ENCODE measurements at regions of chr14 and their contacts with region 1.

Region 1: GRCh38 chr14:73173092-73173735 is 36.9 kb downstream of the PSEN1 start:
- DNase-seq: no peak
- ATAC-seq: no peak

Region 2: DNA sequence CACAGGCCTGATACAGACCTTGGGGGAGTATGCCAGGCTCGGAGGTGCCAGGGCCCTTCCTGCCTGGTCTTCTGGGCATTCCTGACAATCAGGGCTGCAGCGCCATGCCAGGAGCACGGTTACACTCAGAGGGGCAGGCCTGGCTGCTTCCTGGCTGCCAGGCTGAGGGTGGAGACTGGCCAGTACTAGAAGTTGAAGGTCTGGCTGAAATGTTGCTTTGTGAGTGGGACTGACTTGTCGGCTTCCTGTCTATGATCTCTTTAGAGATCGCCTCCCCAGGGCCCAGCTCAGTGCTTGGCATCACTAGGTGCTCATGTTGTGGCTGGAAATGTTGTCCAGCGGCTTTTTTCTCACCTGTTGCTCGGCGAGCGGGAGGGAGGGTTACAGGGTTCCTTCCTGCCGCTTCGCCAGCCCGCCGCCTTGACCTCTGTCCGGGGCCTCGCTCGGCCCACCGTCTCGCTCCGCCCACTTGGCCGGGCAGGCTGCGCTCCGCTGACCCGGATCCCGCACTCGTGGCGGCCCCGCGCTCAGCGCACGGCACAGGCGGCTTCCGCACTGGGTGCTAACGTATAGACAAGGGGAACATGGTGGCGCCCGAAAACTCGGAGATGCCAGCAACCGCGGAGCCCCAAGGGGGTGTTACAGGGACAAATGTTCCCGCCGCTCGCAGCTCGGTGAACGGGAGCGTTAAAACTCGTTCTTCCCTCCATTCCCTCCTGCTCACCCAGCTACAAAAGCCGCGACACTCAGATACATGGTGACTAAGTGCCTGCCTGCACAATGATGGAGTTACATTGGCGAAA is 96.7 kb after region 1 on chr14:
- intact Hi-C with region 1: loop called in 1 of 2 experiments (anchors 10 kb)
- DNase-seq: peak; percentile 64
- ATAC-seq: peak; percentile 82 to 84

Region 3: DNA sequence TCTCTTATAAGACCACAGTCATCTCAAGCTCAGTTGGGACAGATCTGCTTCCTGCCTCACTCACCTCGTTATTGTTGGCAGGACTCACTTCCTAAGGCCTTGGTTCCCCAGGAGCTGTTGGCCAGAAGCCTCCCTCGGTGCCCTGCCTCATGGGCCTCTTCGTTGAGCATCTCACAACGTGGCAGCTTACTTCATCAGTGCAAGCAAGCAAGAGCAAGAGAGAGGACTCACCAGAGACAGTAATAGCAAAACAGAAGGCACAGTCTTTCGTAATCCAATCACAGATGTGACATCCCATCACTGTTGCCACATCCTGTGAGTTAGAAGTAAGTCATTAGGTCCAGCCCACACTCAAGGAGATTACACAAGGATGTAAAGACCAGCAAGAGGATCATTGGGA is 290.2 kb after region 1 on chr14:
- intact Hi-C with region 1: loop called in 1 of 2 experiments (anchors 10 kb)
- DNase-seq: peak; percentile 59
- ATAC-seq: peak in 1 of 2 donors; percentile 2

Region 4: GRCh38 chr14:73472185-73473114 is 299.2 kb after region 1 on chr14:
- intact Hi-C with region 1: loop called (anchors 2 to 10 kb)
- DNase-seq: no peak
- ATAC-seq: peak; percentile 75 to 88